AG04450 (cell line): ENCODE measurements at regions of chr5 and their contacts with region 1.

Region 1: DNA sequence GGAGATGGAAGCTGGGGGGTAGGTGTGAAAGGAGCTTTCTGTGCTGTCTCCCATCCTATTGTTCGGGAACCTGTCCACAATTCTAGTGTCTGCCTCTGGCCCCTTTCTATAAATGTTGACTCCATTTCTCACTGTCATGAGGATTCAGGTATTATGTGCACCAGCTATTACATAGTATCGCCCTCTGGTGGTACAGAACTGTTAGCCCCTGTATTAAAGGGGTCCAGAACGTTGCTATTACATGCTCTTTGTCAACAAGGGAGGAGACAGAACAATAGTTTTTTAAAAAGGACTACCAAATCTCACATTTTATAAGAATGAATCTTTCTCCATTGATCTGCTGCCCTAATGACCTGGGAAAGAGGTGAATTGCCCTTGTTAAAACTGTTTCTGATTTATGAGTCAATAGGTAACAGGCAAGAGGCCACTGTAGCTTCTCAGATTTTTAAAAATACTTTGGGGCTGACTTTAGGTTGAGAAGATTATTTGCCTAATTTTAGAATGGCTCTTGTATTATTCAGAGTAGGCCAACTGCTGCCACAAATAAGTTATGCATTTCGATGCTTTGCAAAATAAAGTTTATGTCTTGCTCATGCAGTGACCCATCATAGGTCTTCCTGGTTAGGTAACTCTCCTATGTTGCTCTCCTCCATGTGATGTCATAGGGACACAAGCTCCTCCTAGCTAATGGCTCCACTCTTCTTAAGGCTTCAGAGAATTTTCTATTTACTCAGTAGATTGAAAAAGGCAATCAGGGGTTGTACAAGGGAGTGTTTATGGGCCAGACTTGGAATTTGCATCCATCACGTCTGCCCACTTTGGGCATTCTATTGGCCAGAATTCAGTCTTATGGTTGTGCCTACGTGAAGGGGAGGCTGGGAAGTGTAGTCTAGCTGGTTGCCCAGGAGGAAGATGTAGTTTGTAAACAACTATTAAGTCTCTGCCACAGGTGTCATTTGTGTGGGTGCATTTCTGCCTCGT is 20.8 kb downstream of the DCANP1 start:
- DNase-seq: no peak
- H3K4me3 ChIP-seq: no peak overlapping the region
- H3K27ac ChIP-seq: no peak overlapping the region
- H3K27me3 ChIP-seq: no peaks in the 10 kb centered on the region
- CTCF ChIP-seq: peak; percentile 87

Region 2: GRCh38 chr5:135402031-135402430 is 24.4 kb before region 1 on chr5:
- CTCF ChIA-PET with region 1: interaction called, 13 read pairs
- POLR2A ChIA-PET with region 1: no interaction called
- DNase-seq: no peak
- H3K4me3 ChIP-seq: no peak overlapping the region
- H3K27ac ChIP-seq: no peak overlapping the region
- H3K27me3 ChIP-seq: peaks cover 3% of the 10 kb centered on the region
- CTCF ChIP-seq: no peak

Region 3: DNA sequence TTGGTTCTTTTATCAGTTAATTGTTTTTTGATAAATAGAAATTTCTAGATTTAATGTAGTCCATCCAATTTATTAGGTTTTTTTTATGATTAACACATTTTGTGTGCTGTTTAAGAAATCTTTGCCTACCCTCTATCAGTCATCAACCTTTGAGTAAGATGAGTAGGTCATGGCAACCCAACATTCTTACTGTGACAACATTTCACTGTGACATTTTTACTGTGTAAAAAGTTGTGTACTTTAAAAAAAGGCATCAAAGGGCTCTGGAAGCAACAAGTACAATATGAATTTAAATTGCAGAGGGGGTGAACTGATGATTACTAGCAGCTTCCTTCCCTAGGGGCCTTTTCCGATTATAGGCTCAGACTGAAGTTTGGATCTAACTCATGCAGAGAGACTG is 16.0 kb before region 1 on chr5:
- CTCF ChIA-PET with region 1: interaction called, 23 read pairs
- POLR2A ChIA-PET with region 1: no interaction called
- DNase-seq: no peak
- H3K4me3 ChIP-seq: no peak overlapping the region
- H3K27ac ChIP-seq: no peak overlapping the region
- H3K27me3 ChIP-seq: peaks cover 19% of the 10 kb centered on the region
- CTCF ChIP-seq: no peak

Region 4: GRCh38 chr5:135437796-135438560 is 11.6 kb after region 1 on chr5:
- CTCF ChIA-PET with region 1: interaction called, 77 read pairs
- POLR2A ChIA-PET with region 1: no interaction called
- DNase-seq: peak; percentile 92
- H3K4me3 ChIP-seq: no peak overlapping the region
- H3K27ac ChIP-seq: peak overlapping the region; percentile 82
- H3K27me3 ChIP-seq: no peaks in the 10 kb centered on the region
- CTCF ChIP-seq: peak; percentile 21

Region 5: GRCh38 chr5:135551593-135552447 is 125.4 kb after region 1 on chr5:
- CTCF ChIA-PET with region 1: interaction called, 11 read pairs
- POLR2A ChIA-PET with region 1: no interaction called
- DNase-seq: peak; percentile 38
- H3K4me3 ChIP-seq: no peak overlapping the region
- H3K27ac ChIP-seq: no peak overlapping the region
- H3K27me3 ChIP-seq: peaks cover 56% of the 10 kb centered on the region
- CTCF ChIP-seq: peak; percentile 88